ENCODE measurements at regions of chr3 and their contacts with region 1.

Region 1: DNA sequence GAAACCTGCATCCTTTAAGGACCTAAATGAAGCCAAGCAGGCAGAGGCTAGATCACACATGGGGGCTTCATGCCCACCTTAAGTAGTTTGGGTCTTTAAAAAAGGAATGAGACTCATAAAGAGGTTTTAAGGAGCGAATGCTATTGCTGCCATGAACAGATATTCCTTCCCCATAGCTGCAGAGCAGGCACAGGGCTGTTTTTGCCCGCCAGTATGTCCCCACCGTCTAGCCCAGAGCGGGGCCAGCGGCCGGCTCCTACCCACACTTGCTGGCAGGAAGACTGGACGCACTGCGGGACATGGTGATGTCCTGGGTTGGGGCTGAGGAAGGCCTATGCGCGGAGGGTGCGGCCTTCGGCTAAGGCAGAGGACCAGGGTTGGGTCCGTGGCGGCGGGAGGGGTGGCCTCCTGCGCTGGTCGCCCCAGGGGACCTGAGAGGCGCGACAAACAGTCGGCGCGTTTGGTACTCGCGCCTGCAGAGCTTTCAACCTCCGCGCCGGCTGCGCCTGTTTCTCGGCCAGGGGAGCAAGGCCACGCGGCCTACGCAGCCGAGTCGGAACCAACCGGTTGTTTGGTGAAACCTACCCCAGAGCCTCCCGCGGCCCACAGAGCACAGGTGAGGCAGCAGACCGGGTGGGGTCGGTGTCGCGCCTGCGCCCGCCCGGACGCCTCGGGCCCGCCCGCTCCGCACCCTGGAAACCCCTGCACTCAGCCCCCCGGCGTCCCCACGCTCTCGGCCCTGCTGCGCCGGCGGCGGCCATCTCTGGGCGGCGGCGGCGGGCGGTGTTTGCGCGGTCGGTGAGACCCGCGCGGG is at the start of gene FAIM:
- DNase-seq: peak; percentile 47 to 82
- H3K4me3 ChIP-seq: peak within 1 kb of the TSS; percentile 85
- H3K27ac ChIP-seq: peak within 1 kb of the TSS; percentile 82
- H3K4me1 ChIP-seq: peaks cover 14% of the 10 kb centered on the region; the same call in 1 of the 2 replicates
- H3K27me3 ChIP-seq: no peaks in the 10 kb centered on the region
- CTCF ChIP-seq: no peak
- total RNA-seq, gene FAIM: 17.7 and 18.6 TPM in 2 replicates

Region 2: GRCh38 chr3:138625707-138626365 is 17.3 kb after region 1 on chr3:
- CTCF ChIA-PET with region 1: no interaction called
- POLR2A ChIA-PET with region 1: no interaction called
- intact Hi-C with region 1: no loop called
- DNase-seq: peak; percentile 45 to 50
- H3K4me3 ChIP-seq: no peak overlapping the region
- H3K27ac ChIP-seq: no peak overlapping the region
- H3K4me1 ChIP-seq: no peaks in the 10 kb centered on the region
- H3K27me3 ChIP-seq: no peaks in the 10 kb centered on the region
- CTCF ChIP-seq: no peak

Region 3: GRCh38 chr3:138694287-138695007 is 85.9 kb after region 1 on chr3:
- CTCF ChIA-PET with region 1: no interaction called
- POLR2A ChIA-PET with region 1: interaction called, 10 read pairs
- intact Hi-C with region 1: no loop called
- DNase-seq: peak; percentile 52 to 94
- H3K4me3 ChIP-seq: no peak overlapping the region
- H3K27ac ChIP-seq: peak overlapping the region; percentile 71
- H3K4me1 ChIP-seq: peaks cover 26% of the 10 kb centered on the region
- H3K27me3 ChIP-seq: no peaks in the 10 kb centered on the region
- CTCF ChIP-seq: no peak

Region 4: DNA sequence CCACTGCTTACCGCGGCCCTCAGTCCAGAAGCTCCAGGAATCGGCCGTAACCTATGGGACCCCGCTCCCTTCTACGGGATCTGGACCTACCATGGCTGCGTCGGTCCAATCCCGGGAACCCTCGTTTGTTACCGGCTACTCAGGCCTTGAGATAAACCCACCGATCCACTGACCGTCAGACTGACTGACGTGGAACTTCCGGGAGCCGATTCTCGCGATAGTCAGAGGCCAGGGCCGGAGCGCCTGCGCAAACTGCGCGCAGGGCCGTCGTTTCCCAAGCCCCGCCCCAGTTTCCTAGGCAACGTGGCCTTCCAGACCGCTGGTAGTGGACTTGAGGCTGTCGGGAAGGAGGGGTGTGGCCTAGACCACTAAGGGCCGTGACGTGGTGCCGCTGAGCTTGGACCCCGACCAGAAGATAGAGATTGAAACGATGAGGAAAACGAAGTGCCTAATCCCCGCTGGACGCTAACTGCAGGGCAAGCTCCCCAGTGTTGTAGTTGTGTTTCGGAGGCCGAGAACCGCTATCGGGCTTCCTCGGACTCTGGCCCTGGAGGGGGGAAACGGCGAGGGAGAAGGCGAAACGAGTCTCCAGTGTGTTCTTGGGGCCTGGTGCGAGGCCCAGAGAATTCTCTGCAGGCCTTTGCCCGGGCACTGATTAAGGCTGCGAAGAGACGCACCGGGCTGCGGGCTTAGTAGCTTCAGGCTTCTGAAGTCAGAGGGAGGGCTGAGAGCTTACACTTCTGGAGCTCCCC is 781.1 kb after region 1 on chr3 and contains the start of gene COPB2:
- CTCF ChIA-PET with region 1: no interaction called
- POLR2A ChIA-PET with region 1: no interaction called
- intact Hi-C with region 1: no loop called
- DNase-seq: peak; percentile 96 to 100
- H3K4me3 ChIP-seq: peak within 1 kb of the TSS; percentile 78
- H3K27ac ChIP-seq: peak within 1 kb of the TSS; percentile 88
- H3K4me1 ChIP-seq: peaks cover 20% of the 10 kb centered on the region
- H3K27me3 ChIP-seq: no peaks in the 10 kb centered on the region
- CTCF ChIP-seq: no peak
- total RNA-seq, gene COPB2: 147 and 156 TPM in 2 replicates